Naive thymus-derived CD4-positive, alpha-beta T cell (primary cell): ENCODE measurements at regions of chr1 and their contacts with region 1.

Region 1: DNA sequence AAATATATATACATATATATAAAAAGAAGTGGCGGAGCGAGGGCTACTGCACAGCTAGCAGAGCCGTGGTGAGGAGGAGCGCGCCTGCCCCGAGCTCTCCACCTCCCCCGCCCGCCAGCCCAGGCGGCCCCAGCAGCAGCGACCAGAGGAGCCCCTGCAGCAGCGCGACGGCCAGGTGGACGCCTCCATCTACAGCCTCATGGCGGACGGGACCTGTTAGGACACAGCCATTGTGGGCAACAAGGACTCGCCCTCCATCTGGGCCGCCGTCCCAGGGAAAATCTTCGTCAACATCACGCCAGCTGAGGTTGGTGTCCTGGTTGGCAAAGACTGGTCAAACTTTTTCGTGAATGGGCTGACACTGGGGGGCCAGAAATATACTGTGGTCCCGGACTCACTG is 41.9 kb upstream of the REG4 start:
- DNase-seq: no peak
- ATAC-seq: no peak
- H3K4me3 ChIP-seq: no peak overlapping the region
- H3K4me3 Mint-ChIP-seq: no peak overlapping the region
- H3K27ac ChIP-seq: no peak overlapping the region
- H3K27ac Mint-ChIP-seq: no peak overlapping the region
- H3K4me1 ChIP-seq: no peaks in the 10 kb centered on the region
- H3K4me1 Mint-ChIP-seq: peaks cover 0 to 3% (median 0%) of the 10 kb centered on the region in 7 donors
- H3K27me3 ChIP-seq: no peaks in the 10 kb centered on the region
- H3K27me3 Mint-ChIP-seq: peaks cover 0 to 14% (median 2%) of the 10 kb centered on the region in 5 donors

Region 2: GRCh38 chr1:119840745-119841144 is 12.4 kb before region 1 on chr1:
- CTCF ChIA-PET with region 1: no interaction called
- POLR2A ChIA-PET with region 1: no interaction called
- intact Hi-C with region 1: loop called in 1 of 2 experiments (anchors 1 kb)
- DNase-seq: no peak
- ATAC-seq: no peak
- H3K4me3 ChIP-seq: no peak overlapping the region
- H3K4me3 Mint-ChIP-seq: no peak overlapping the region
- H3K27ac ChIP-seq: no peak overlapping the region
- H3K27ac Mint-ChIP-seq: no peak overlapping the region
- H3K4me1 ChIP-seq: no peaks in the 10 kb centered on the region
- H3K4me1 Mint-ChIP-seq: peaks cover 0 to 2% (median 0%) of the 10 kb centered on the region in 7 donors
- H3K27me3 ChIP-seq: no peaks in the 10 kb centered on the region
- H3K27me3 Mint-ChIP-seq: peaks cover 0 to 40% (median 8%) of the 10 kb centered on the region in 5 donors

Region 3: DNA sequence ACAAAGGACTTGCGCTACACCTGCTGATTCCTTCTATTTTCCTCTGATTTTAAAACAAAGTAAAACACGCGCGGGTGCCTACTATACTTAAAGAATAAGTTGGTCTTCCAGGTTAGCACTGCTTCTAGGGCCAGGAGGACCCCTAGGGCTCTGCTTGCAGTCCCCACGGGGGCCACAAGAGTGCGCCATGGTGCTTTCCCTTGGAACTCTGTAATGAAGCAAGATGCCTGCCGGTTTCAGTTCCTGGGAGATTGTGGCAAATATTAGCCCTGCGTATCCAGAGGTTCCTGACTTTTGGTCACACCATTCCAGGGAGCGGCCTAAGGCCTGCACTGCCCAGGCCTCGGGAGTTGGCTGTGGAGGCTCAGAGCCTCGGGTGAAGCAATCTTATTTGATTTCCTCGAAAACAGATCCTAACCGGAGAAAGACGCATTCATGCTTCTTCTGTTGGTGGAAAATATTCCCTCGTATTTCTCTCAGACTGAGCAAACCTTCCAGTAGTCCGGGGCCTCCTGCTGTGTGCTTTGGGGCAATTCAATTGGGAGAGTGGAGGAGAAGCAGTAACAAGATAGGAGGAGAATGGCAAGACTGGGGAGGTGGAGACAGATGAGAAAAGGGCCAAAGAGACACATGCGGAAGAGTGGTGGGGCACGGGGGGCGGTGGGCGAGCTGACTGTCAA is 17.9 kb after region 1 on chr1:
- CTCF ChIA-PET with region 1: no interaction called
- POLR2A ChIA-PET with region 1: no interaction called
- intact Hi-C with region 1: no loop called
- DNase-seq: peak; percentile 4 to 71 (median 34)
- ATAC-seq: peak; percentile 88
- H3K4me3 ChIP-seq: no peak overlapping the region
- H3K4me3 Mint-ChIP-seq: peak overlapping the region in 1 of 10 donors; percentile 36
- H3K27ac ChIP-seq: no peak overlapping the region
- H3K27ac Mint-ChIP-seq: no peak overlapping the region
- H3K4me1 ChIP-seq: no peaks in the 10 kb centered on the region
- H3K4me1 Mint-ChIP-seq: peaks cover 0 to 13% (median 0%) of the 10 kb centered on the region in 7 donors
- H3K27me3 ChIP-seq: no peaks in the 10 kb centered on the region
- H3K27me3 Mint-ChIP-seq: peaks cover 9 to 45% (median 23%) of the 10 kb centered on the region in 5 donors